B cell (primary cell): ENCODE measurements at regions of chr19 and their contacts with region 1.

Region 1: GRCh38 chr19:39435499-39436349 is at the start of gene RPS16:
- DNase-seq: peak; percentile 99
- ATAC-seq: peak; percentile 94
- H3K4me3 ChIP-seq: peak within 1 kb of the TSS; percentile 65 to 100 (median 84)
- H3K4me3 Mint-ChIP-seq: peak within 1 kb of the TSS; percentile 100
- H3K27ac ChIP-seq: peak within 1 kb of the TSS; percentile 80 to 93
- H3K27ac Mint-ChIP-seq: peak within 1 kb of the TSS; percentile 100
- H3K4me1 ChIP-seq: peaks cover 29 to 35% of the 10 kb centered on the region in 2 donors
- H3K4me1 Mint-ChIP-seq: peaks cover 47% of the 10 kb centered on the region
- H3K27me3 ChIP-seq: no peaks in the 10 kb centered on the region
- H3K27me3 Mint-ChIP-seq: no peaks in the 10 kb centered on the region
- CTCF ChIP-seq: no peak
- total RNA-seq, gene RPS16: 3,766 and 3,910 TPM in 2 replicates

Region 2: GRCh38 chr19:39335168-39335548 is 100.6 kb before region 1 on chr19:
- CTCF ChIA-PET with region 1: no interaction called
- POLR2A ChIA-PET with region 1: interaction called, 10 read pairs
- intact Hi-C with region 1: no loop called
- DNase-seq: no peak
- ATAC-seq: peak; percentile 4
- H3K4me3 ChIP-seq: peak overlapping the region; percentile 39 to 98 (median 80)
- H3K4me3 Mint-ChIP-seq: peak overlapping the region; percentile 99
- H3K27ac ChIP-seq: peak overlapping the region; percentile 84 to 88
- H3K27ac Mint-ChIP-seq: peak overlapping the region; percentile 99
- H3K4me1 ChIP-seq: peaks cover 38 to 43% of the 10 kb centered on the region in 2 donors
- H3K4me1 Mint-ChIP-seq: peaks cover 53% of the 10 kb centered on the region
- H3K27me3 ChIP-seq: no peaks in the 10 kb centered on the region
- H3K27me3 Mint-ChIP-seq: no peaks in the 10 kb centered on the region
- CTCF ChIP-seq: no peak

Region 3: DNA sequence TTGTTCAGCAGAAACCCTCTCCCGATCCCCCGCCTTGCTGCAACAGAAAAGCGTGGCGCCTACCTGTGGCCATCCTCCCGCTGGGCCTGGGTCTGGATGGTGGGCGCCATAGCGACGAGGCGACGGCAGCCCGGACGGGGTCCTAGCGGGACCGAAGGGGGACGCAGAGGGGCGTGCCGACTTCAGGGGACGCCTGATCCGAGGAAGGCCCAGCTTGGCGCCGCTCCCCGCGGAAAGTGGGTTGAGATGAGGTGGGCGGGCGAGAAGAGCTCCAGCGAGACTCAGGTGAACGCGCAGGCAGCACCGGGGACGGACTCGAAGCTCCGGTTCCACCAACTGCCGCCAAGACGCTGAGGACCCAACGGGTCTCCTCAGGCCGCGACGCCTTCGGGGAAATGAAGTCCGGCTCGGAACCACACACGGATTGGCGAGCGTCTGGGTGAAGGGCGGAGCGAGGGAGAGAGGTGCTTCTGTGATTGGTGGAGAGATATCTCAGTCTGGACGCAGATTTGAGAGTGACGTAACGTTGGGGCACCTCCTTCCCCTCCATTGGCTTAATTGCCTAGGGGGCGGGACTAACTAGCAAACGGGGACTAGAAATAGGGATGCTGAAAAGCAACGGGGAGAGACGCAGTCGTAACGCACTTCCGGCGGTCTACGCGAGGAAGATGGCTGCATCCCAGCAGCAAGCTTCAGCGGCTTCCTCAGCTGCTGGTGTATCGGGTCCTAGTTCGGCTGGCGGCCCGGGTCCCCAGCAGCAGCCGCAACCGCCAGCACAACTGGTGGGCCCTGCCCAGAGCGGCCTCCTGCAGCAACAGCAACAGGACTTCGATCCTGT is 44.8 kb before region 1 on chr19 and contains the starts of genes MED29 and PAF1:
- CTCF ChIA-PET with region 1: interaction called, 28 read pairs
- POLR2A ChIA-PET with region 1: interaction called, 19 read pairs
- intact Hi-C with region 1: loop called (anchors 1 kb)
- DNase-seq: peak; percentile 99
- ATAC-seq: peak; percentile 90
- H3K4me3 ChIP-seq: peak within 1 kb of the TSS; percentile 73 to 99 (median 90)
- H3K4me3 Mint-ChIP-seq: peak within 1 kb of the TSS; percentile 87
- H3K27ac ChIP-seq: peak within 1 kb of the TSS; percentile 96 to 97
- H3K27ac Mint-ChIP-seq: peak within 1 kb of the TSS; percentile 99
- H3K4me1 ChIP-seq: peaks cover 16 to 28% of the 10 kb centered on the region in 2 donors
- H3K4me1 Mint-ChIP-seq: peaks cover 39% of the 10 kb centered on the region
- H3K27me3 ChIP-seq: no peaks in the 10 kb centered on the region
- H3K27me3 Mint-ChIP-seq: no peaks in the 10 kb centered on the region
- CTCF ChIP-seq: no peak
- total RNA-seq, gene MED29: 47.5 and 53.0 TPM in 2 replicates
- total RNA-seq, gene PAF1: 54.6 and 59.9 TPM in 2 replicates

Region 4: DNA sequence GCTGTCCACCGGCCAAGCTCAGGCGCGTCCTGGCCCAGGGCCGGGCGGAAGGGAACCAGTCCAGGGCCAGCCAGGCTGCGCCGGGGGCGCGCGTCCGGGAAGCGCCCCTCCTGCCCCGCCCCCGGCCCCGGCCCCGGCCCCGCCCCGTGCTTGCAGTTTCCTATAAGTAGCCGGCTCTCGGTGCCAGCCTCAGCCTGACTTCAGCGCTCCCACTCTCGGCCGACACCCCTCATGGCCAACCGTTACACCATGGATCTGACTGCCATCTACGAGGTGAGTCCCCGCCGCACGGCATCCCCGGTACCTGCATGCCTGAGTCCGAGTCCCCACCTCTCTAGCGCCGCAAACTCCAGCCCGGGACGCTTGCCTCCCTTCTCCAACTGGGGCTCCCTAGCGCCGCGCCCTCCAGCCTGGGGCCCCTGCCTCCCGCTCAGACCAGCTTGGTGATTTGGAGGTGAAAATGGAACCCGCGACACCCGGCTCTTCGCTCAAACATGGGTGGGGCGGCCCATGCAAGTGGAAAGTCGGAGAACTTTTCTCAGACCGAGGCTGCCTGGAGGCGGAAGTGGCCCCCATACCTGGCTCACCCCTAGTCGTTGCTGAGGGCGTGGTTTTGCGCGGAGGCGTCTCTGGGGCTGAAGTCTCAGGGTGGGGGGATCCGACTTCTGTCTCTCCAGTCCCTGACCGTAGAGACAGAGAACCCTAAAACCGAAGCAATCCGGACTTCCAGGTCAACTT is 28.9 kb before region 1 on chr19 and contains the start of gene ZFP36:
- CTCF ChIA-PET with region 1: interaction called, 23 read pairs
- POLR2A ChIA-PET with region 1: interaction called, 26 read pairs
- intact Hi-C with region 1: loop called (anchors 1 kb)
- DNase-seq: peak; percentile 92
- ATAC-seq: peak; percentile 22
- H3K4me3 ChIP-seq: peak within 1 kb of the TSS; percentile 87 to 99 (median 95)
- H3K4me3 Mint-ChIP-seq: peak within 1 kb of the TSS; percentile 94
- H3K27ac ChIP-seq: peak within 1 kb of the TSS; percentile 100
- H3K27ac Mint-ChIP-seq: peak within 1 kb of the TSS; percentile 97
- H3K4me1 ChIP-seq: peaks cover 46 to 69% of the 10 kb centered on the region in 2 donors
- H3K4me1 Mint-ChIP-seq: peaks cover 63% of the 10 kb centered on the region
- H3K27me3 ChIP-seq: no peaks in the 10 kb centered on the region
- H3K27me3 Mint-ChIP-seq: no peaks in the 10 kb centered on the region
- CTCF ChIP-seq: no peak
- total RNA-seq, gene ZFP36: 252 and 260 TPM in 2 replicates

Region 5: GRCh38 chr19:39480337-39481228 is 44.9 kb after region 1 on chr19 and contains the start of gene TIMM50:
- CTCF ChIA-PET with region 1: interaction called, 3 read pairs
- POLR2A ChIA-PET with region 1: interaction called, 8 read pairs
- intact Hi-C with region 1: loop called (anchors 1 kb)
- DNase-seq: peak; percentile 95
- ATAC-seq: peak; percentile 99
- H3K4me3 ChIP-seq: peak within 1 kb of the TSS; percentile 65 to 95 (median 89)
- H3K4me3 Mint-ChIP-seq: peak within 1 kb of the TSS; percentile 96
- H3K27ac ChIP-seq: peak within 1 kb of the TSS; percentile 67 to 84
- H3K27ac Mint-ChIP-seq: peak within 1 kb of the TSS; percentile 94
- H3K4me1 ChIP-seq: peaks cover 14 to 21% of the 10 kb centered on the region in 2 donors
- H3K4me1 Mint-ChIP-seq: peaks cover 25% of the 10 kb centered on the region
- H3K27me3 ChIP-seq: no peaks in the 10 kb centered on the region
- H3K27me3 Mint-ChIP-seq: no peaks in the 10 kb centered on the region
- CTCF ChIP-seq: no peak
- total RNA-seq, gene TIMM50: 52.3 and 55.3 TPM in 2 replicates